K562 (cell line): ENCODE measurements at regions of chr7 and their contacts with region 1.

Region 1: DNA sequence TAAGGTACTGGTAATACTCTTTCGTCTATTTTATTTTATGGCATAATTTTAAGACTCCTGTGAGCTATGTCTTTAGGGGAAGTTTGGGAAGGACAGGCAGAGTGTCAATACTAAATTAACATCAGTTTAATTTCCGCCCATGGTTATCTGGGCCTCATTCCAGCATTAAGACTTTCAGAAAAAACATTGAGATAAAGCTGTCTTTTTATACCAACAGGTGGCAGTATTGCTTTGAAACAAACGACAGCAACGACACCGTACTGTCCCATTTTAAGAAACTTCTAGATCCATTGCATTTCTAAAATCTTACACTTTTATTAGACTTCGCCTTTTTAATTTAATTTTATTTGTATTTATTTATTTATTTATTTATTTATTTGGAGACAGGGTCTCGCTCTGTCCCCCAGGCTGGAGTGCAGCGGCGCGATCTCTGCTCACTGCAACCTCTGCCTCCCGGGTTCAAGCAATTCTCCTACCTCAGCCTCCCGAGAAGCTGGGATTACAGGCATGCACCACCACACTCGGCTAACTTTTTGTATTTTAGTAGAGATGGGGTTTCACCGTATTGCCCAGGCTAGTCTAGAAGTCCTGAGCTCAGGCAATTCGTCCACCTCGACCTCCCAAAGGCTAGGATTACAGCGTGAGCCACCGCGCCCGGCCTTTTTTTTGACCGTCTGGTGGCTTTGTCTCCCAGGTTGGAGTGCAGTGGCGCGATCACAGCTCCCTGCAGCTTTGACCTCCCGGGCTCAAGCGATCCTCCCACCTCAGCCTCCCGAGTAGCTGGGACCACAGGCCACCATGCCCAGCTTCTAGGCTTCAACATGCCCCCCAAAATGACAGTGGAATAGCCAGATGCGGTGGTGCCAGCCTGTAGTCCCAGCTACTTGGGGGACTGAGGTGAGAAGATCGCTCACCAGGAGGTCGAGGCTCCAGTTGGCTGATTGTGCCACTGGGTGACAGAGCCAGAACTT is 78.7 kb upstream of the C1GALT1 start:
- DNase-seq: peak; percentile 42 to 82 (median 49)
- ATAC-seq: peak; percentile 47
- H3K4me3 ChIP-seq: peak overlapping the region; percentile 32
- H3K27ac ChIP-seq: peak overlapping the region; percentile 72
- H3K4me1 ChIP-seq: peaks cover 22 to 43% of the 10 kb centered on the region in 2 experiments; a peak in 4 of 5 replicates
- H3K27me3 ChIP-seq: no peaks in the 10 kb centered on the region
- CTCF ChIP-seq: peak; percentile 41 to 76 (median 63); a peak in 5 of 6 replicates
- EP300 ChIP-seq: no peak
- POLR2A ChIP-seq: no peak
- RAD21 ChIP-seq: peak; percentile 78 to 87

Region 2: GRCh38 chr7:7114706-7115295 is 11.2 kb after region 1 on chr7:
- CTCF ChIA-PET with region 1: no interaction called
- POLR2A ChIA-PET with region 1: interaction called, 13 read pairs
- in situ Hi-C with region 1: no loop called
- intact Hi-C with region 1: no loop called
- DNase-seq: no peak
- ATAC-seq: peak; percentile 59
- H3K4me3 ChIP-seq: no peak overlapping the region
- H3K27ac ChIP-seq: no peak overlapping the region
- H3K4me1 ChIP-seq: no peaks in the 10 kb centered on the region; a peak in 1 of 5 replicates
- H3K27me3 ChIP-seq: no peaks in the 10 kb centered on the region
- CTCF ChIP-seq: no peak
- EP300 ChIP-seq: no peak
- POLR2A ChIP-seq: no peak
- RAD21 ChIP-seq: no peak

Region 3: DNA sequence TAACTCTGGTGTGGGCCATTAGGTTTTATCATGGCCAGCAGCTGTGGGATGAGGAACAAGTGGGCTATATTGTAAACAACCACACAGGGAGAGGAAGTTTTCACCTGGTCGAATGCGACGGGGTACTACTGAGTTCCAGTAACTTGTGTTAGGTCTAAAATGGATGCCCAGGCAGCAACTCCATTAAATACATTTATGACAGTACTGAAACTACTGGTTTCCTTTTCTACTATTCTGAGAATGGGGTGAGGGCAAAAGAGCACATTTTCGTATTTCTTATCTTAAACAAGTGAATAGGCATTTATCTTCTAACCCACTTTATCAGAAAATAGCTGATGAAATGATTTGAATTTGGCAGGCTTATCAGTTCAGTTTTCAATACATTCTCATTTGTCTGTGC is 188.5 kb after region 1 on chr7:
- CTCF ChIA-PET with region 1: no interaction called
- POLR2A ChIA-PET with region 1: interaction called, 3 read pairs
- in situ Hi-C with region 1: no loop called
- intact Hi-C with region 1: loop called (anchors 10 kb)
- DNase-seq: no peak
- ATAC-seq: no peak
- H3K4me3 ChIP-seq: no peak overlapping the region
- H3K27ac ChIP-seq: no peak overlapping the region
- H3K4me1 ChIP-seq: peaks cover 0 to 7% of the 10 kb centered on the region in 2 experiments; a peak in 2 of 5 replicates
- H3K27me3 ChIP-seq: no peaks in the 10 kb centered on the region
- CTCF ChIP-seq: no peak
- EP300 ChIP-seq: no peak
- POLR2A ChIP-seq: no peak
- RAD21 ChIP-seq: no peak

Region 4: DNA sequence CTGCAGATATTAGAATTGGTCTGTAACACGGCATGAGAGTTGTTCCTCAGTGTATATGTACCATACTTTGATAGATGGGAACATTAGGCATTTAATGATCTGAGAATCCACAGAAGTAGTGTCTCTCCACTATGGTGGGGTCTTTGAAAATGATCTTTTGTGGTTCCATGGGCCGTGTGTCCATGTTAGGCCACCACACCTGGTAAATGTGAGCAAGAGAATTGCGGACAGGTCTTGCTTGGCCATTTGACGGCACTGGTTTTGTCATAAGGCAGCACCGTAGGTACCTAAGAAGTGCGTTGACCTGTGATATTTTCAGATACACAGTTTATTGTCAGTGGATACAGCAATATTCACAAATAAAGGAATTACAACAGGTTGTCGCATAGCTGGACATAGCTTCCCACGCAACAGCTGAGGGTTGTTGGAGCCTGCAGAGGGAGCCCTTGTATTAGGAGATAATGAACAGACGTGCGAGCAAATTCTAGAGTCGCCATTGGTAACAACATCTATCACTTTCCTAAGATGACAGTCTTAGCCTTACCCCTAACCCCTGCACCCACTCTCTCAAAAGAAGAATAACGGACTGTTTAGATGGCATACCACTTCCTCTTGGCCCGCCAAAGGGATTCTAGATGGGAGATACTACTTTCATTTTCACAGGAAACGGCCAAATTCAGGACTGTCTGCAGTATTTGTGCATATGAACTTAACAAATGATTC is 320.7 kb after region 1 on chr7:
- CTCF ChIA-PET with region 1: no interaction called
- POLR2A ChIA-PET with region 1: no interaction called
- in situ Hi-C with region 1: no loop called
- intact Hi-C with region 1: loop called (anchors 2 kb)
- DNase-seq: peak; percentile 21 to 76 (median 40)
- ATAC-seq: peak; percentile 97
- H3K4me3 ChIP-seq: peak overlapping the region; percentile 34
- H3K27ac ChIP-seq: no peak overlapping the region
- H3K4me1 ChIP-seq: peaks cover 0 to 5% of the 10 kb centered on the region in 2 experiments; a peak in 2 of 5 replicates
- H3K27me3 ChIP-seq: peaks cover 0 to 6% of the 10 kb centered on the region in 2 experiments; a peak in 4 of 5 replicates
- CTCF ChIP-seq: peak; percentile 71 to 87 (median 86)
- EP300 ChIP-seq: no peak
- POLR2A ChIP-seq: no peak
- RAD21 ChIP-seq: peak; percentile 83 to 90

Region 5: GRCh38 chr7:7542251-7542835 is 438.7 kb after region 1 on chr7:
- CTCF ChIA-PET with region 1: no interaction called
- POLR2A ChIA-PET with region 1: no interaction called
- in situ Hi-C with region 1: loop called (anchors 5 kb)
- intact Hi-C with region 1: loop called (anchors 5 kb)
- DNase-seq: no peak
- ATAC-seq: no peak
- H3K4me3 ChIP-seq: no peak overlapping the region
- H3K27ac ChIP-seq: no peak overlapping the region
- H3K4me1 ChIP-seq: no peaks in the 10 kb centered on the region
- H3K27me3 ChIP-seq: no peaks in the 10 kb centered on the region
- CTCF ChIP-seq: no peak
- EP300 ChIP-seq: no peak
- POLR2A ChIP-seq: no peak
- RAD21 ChIP-seq: no peak